Sciatic nerve (tissue), 2 donors: ENCODE measurements at regions of chr6 and their contacts with region 1.

Region 1: GRCh38 chr6:169363590-169363989 is 109.9 kb upstream of the THBS2 start:
- DNase-seq: no peak
- ATAC-seq: peak; percentile 32

Region 2: DNA sequence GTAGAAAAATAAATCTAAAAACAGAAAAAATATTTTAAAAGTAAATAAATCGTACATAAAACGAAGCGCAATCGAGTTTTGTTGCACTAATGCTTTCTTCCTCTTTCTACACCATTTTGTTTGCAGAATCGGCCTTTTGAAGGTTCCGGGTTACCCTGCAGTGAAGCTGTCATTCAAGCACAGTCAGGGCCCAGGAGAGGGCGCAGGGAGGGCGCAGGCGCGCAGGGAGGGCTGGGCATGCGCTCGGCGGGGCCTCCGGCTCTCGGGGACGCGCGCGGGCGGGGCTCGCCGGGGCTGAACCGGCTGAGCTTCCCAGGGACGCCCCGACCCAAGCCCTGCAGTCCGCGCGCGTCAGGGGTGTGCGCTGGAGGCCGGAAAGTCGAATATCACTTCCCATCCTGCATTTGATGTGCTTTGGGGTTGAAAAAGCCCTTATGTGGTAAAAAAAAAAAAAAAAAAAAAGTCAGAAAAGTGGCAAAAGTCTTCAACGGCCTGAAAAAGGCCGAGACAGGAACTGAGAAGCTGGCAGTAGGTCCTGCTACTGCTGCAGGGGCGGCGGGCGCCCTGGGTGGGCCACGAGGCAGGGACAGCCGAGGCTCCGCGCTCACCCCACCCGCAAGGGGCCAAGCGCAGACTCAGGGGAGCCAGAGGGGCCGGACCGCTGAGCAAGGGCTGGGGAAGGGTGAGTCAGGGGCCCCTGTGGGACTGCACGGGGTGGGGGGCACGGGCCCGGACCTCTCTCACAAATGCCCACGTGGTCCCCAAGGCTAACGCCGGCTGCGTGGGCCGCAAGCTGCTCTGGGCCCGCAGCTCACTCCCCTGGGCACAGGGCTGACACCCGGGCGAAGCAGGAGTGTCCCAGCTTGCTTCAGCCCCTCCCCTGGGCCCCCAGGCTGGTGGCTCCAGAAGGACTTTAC is 150.4 kb before region 1 on chr6:
- intact Hi-C with region 1: loop called (anchors 5 kb)
- DNase-seq: peak; percentile 95
- ATAC-seq: peak; percentile 94

Region 3: DNA sequence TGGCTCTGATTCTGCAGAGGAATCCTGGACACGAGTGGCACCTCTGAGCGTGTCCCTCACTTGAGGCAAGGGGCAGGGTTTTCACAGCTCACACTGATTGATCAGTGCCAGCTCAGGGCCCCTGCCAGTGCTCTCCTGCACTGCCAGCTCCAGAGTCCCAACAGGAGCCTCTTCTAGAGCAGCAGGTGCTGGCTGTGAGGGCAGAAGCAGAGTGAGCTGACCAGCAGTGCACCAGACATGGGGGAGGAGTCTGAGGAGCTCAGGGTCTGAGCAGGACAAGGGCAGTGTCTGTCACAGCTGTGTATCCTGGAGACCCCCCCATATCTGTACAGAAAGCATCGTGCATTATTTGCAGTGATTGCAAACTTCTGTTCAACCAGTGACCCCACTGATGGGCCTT is 78.4 kb before region 1 on chr6:
- intact Hi-C with region 1: no loop called
- DNase-seq: no peak
- ATAC-seq: no peak

Region 4: DNA sequence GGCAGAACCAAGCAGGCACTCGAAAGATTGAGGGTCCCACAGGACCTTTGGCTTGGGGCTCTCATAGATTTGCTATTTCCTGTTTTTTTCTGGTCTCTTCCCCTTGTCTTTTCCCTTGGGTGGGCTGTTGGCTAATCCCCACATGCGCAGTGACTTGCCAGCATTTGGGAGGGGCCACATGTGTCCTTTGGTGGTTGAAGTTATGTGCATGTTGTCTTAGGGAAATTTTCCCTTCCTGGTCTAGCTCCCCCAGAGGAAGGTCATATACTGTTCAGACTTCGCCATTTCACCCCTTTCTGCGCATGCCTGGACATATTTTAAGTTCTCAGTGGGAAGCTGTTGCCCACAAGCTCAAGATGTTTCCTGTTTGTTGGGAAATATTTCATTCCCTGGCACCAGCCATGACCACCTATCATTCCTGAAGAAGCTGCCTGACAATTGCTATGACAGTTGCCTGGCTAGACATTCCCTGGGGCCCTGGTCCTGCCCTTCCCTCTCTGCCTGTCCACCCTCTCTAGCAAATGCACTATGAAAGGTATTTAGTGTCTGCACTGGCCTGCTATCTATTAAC is 46.2 kb after region 1 on chr6:
- intact Hi-C with region 1: no loop called
- DNase-seq: no peak
- ATAC-seq: no peak